Activated naive CD4-positive, alpha-beta T cell treated with anti-CD3 and anti-CD28 coated beads for 36 hours (primary cell): ENCODE measurements at regions of chr1 and their contacts with region 1.

Region 1: DNA sequence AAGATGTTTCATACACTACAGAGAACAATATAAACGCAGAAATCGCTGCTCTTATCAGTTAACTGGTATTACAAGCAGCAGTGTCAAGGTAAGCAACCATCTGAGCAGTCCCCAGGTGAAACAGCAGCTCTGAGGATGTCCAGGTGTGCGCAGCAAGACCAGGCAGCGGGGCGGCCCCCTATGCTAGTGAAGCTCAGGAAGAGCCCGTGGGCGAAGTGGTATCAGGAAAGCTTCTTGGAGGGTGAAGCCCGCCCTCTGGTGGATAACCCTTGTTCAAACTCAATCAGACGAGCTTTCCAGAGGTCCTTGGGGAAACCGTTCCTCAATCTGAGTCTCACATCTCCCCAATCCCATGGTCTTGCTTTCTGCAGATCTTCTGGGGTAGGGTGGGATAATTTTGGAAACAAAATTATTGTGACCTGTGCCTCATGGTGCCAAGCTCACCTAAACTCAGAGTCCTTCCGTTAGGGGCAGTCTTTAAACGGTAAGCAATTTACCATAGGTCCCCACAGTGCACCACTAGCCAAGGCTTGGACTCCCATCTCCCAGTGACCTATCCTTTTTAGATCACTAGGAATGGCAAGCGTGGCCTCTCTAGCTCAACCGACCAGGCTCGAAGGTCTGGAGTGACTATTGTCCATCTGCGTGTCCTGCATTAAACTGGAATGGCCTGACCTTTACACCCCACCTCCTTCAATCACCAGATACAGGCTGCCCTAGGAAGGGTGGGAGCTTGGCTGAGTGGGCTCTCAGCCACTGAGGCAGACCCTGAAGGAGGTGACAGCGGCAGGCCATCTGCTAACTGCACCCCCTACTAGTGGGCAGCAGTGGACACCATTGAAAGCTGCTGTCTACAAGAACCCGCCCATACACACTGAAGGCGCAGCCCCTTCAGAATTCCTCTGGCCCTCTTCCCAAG is 13.6 kb upstream of the FAM110D start:
- DNase-seq: peak; percentile 88
- H3K4me3 Mint-ChIP-seq: no peak overlapping the region
- H3K27ac Mint-ChIP-seq: no peak overlapping the region
- H3K4me1 Mint-ChIP-seq: peaks cover 2% of the 10 kb centered on the region
- H3K27me3 Mint-ChIP-seq: no peaks in the 10 kb centered on the region

Region 2: GRCh38 chr1:26084091-26084561 is 61.2 kb before region 1 on chr1:
- CTCF ChIA-PET with region 1: interaction called, 11 read pairs
- intact Hi-C with region 1: no loop called
- DNase-seq: no peak
- H3K4me3 Mint-ChIP-seq: no peak overlapping the region
- H3K27ac Mint-ChIP-seq: no peak overlapping the region
- H3K4me1 Mint-ChIP-seq: no peaks in the 10 kb centered on the region
- H3K27me3 Mint-ChIP-seq: peaks cover 4% of the 10 kb centered on the region

Region 3: GRCh38 chr1:26111530-26112406 is 33.5 kb before region 1 on chr1 and contains the start of gene PDIK1L:
- CTCF ChIA-PET with region 1: interaction called, 143 read pairs
- intact Hi-C with region 1: no loop called
- DNase-seq: peak; percentile 94
- H3K4me3 Mint-ChIP-seq: peak within 1 kb of the TSS; percentile 96
- H3K27ac Mint-ChIP-seq: peak within 1 kb of the TSS; percentile 90
- H3K4me1 Mint-ChIP-seq: peaks cover 28% of the 10 kb centered on the region
- H3K27me3 Mint-ChIP-seq: no peaks in the 10 kb centered on the region
- total RNA-seq, gene PDIK1L: 20.5 to 21.4 TPM

Region 4: DNA sequence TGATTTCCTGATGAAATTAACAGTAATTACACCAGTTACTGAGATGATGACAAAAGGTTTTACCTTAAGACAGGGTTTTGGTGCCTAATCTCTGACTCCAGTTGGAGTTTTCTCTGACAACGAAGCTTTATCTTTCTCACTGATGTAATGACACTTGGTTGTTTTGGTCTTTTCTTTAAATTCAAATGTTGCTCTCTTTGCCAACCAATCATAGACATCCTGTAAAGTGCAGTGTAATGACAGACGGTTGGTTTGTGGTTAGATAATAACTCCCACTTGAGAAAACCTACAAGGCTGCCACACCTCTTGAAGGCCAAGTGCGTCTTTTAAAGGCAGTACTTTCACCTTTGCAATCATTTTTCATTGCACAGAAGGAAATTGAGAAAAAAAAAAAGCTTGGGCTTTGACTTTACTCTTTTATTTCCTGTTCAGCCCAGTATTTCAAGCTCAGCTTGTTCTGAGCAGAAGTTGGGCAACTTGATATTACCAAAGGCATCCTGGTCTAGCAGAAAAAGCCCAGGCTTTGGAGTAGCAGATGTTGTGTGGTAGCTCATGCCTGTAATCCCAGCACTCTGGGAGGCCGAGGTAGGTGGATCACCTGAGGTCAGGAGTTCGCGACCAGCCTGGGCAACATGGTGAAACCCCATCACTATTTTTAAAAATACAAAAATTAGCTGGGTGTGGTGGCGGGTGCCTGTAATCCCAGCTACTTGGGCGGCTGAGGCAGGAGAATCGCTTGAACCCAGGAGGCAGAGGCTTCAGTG is 18.8 kb before region 1 on chr1:
- CTCF ChIA-PET with region 1: interaction called, 51 read pairs
- intact Hi-C with region 1: loop called (anchors 2 kb)
- DNase-seq: peak; percentile 65
- H3K4me3 Mint-ChIP-seq: peak overlapping the region; percentile 67
- H3K27ac Mint-ChIP-seq: peak overlapping the region; percentile 95
- H3K4me1 Mint-ChIP-seq: peaks cover 51% of the 10 kb centered on the region
- H3K27me3 Mint-ChIP-seq: no peaks in the 10 kb centered on the region

Region 5: DNA sequence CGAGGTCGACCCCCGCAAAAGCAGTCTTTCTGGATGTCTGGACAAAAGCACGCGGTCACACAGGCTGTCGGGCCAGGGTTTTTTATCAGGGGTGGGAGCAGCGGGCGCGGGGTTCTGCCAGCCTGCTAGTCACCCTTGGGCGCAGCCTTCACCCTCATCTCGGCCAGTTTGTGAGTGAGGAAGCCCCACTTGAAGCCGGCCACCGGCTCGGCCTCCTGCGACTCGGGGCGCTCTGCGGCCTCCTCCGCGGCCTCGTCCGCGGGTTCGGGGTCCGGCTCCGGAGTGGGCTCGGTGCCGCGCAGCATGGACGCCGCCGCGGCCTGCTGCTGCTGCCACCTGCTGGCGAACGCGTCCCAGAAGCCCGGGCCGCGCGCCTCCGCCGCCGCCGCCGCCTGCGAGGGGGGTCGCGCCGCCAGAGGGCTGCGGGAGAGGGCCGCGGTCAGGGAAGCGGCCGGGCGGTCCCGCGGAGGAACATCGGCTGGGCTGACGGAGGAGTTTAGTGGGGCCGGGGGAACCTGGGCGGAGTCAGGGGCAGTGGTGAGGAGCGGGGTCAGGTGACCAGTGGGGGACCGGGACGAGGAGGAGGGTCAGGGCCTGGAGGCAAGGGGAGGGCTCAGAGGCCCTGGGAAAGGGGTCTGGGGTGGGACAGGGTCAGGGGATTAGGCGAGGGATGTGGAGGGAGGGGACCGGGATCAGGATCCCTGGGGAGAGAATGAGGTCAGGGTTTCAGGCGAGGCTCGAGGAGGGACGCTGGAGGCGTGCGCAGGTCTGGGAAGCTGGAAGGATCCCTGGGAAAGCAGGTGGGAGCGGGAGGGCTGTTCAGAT is 18.9 kb after region 1 on chr1:
- CTCF ChIA-PET with region 1: interaction called, 9 read pairs
- intact Hi-C with region 1: loop called (anchors 2 kb)
- DNase-seq: peak; percentile 42
- H3K4me3 Mint-ChIP-seq: peak overlapping the region; percentile 50
- H3K27ac Mint-ChIP-seq: no peak overlapping the region
- H3K4me1 Mint-ChIP-seq: peaks cover 13% of the 10 kb centered on the region
- H3K27me3 Mint-ChIP-seq: peaks cover 25% of the 10 kb centered on the region

Region 6: DNA sequence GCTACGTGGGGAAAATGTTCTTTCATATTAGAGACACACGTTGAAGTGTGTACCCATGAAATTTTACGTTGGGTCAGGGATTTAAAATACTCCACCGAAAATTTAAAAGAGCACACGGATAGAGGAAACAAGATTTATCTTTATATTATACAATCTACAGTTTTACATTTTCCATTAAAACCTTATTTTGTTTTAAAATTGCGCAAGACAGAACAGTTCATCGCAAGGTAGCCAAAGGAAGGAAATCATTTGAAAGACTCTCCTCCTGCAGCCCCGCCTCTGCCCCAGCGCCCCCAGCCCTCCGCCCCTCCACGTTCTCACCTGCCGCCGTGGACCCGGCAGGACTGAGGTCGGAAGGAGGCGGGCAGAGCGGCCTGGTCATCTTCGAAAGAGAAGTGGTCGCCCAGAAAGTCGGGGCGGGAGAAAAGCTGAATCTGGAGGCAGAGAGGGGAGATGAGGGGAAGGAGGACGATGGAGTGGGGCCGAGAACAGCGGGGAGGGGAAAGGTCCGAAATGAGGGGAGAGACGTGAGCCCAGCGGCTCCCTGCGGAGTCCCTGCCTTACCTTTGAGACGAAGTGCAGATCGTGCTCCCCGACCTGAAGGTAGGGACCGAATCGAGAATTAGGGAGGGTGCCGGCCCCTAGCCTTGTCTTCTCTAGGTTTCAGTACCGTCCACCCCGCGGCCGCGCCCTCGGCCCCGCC is 190.6 kb after region 1 on chr1:
- CTCF ChIA-PET with region 1: no interaction called
- intact Hi-C with region 1: no loop called
- DNase-seq: no peak
- H3K4me3 Mint-ChIP-seq: peak overlapping the region; percentile 82
- H3K27ac Mint-ChIP-seq: no peak overlapping the region
- H3K4me1 Mint-ChIP-seq: peaks cover 2% of the 10 kb centered on the region
- H3K27me3 Mint-ChIP-seq: no peaks in the 10 kb centered on the region